ENCODE measurements at regions of chr4 and their contacts with region 1.

Region 1: DNA sequence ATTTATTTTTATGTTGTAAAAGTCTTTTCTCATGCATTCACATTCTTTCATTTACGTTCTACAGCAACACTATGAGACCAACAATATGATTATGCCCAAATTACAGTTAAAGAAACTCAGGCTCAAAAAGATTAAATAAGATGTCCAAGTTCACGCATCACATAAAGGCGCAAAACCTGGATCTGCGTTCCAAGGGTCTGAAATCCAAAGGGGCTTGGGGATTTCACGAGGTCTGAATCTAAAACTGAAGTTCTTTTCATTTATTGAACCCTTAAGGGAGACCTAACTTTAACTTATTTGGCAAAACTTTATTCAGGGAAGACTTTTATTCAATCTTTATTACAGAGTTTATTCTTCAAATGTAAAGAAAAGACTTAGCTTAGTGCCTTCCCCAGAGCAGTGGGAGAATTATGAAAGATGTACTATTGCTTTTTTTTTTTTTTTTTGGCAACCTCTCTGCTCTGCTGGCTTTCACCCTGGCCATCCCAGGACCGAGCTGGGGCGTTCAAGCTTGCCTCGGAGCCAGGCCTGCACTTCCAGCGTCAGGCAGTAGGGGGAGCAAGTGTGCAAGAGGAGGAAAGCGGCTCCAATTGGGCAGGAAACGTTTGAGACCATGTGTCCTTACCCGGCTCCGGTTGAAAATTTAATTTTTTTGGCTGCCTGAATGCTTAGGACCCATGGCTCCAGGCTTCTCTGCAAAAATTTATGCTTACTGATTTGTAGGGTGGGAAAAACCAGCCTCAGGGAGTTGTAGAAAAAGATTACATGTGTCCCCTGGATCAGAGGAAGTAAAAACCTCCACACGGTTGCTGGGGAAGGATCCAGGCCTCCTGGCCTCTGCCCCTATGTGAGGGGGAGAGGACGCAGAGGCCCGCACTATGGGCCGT is 344.3 kb upstream of the KLF3 start:
- DNase-seq: peak; percentile 74
- ATAC-seq: peak; percentile 80
- H3K4me3 ChIP-seq: peak overlapping the region; percentile 47
- H3K27ac ChIP-seq: peak overlapping the region; percentile 91
- H3K4me1 ChIP-seq: peaks cover 27% of the 10 kb centered on the region
- H3K27me3 ChIP-seq: no peaks in the 10 kb centered on the region
- CTCF ChIP-seq: peak; percentile 93 to 99 (median 99)
- EP300 ChIP-seq: no peak
- POLR2A ChIP-seq: no peak
- RAD21 ChIP-seq: peak; percentile 99

Region 2: GRCh38 chr4:37891260-37892159 is 428.2 kb before region 1 on chr4:
- CTCF ChIA-PET with region 1: no interaction called
- POLR2A ChIA-PET with region 1: no interaction called
- RAD21 ChIA-PET with region 1: no interaction called
- SMC1A ChIA-PET with region 1: no interaction called
- in situ Hi-C with region 1: no loop called
- intact Hi-C with region 1: loop called (anchors 10 kb)
- DNase-seq: peak; percentile 79
- ATAC-seq: peak; percentile 69
- H3K4me3 ChIP-seq: peak overlapping the region; percentile 59
- H3K27ac ChIP-seq: peak overlapping the region; percentile 70
- H3K4me1 ChIP-seq: peaks cover 18% of the 10 kb centered on the region
- H3K27me3 ChIP-seq: no peaks in the 10 kb centered on the region
- CTCF ChIP-seq: peak in 1 of 3 experiments; percentile 15; a peak in 1 of 6 replicates
- EP300 ChIP-seq: peak in 1 of 2 experiments; percentile 70; a peak in 1 of 4 replicates
- POLR2A ChIP-seq: peak; percentile 72
- RAD21 ChIP-seq: no peak

Region 3: DNA sequence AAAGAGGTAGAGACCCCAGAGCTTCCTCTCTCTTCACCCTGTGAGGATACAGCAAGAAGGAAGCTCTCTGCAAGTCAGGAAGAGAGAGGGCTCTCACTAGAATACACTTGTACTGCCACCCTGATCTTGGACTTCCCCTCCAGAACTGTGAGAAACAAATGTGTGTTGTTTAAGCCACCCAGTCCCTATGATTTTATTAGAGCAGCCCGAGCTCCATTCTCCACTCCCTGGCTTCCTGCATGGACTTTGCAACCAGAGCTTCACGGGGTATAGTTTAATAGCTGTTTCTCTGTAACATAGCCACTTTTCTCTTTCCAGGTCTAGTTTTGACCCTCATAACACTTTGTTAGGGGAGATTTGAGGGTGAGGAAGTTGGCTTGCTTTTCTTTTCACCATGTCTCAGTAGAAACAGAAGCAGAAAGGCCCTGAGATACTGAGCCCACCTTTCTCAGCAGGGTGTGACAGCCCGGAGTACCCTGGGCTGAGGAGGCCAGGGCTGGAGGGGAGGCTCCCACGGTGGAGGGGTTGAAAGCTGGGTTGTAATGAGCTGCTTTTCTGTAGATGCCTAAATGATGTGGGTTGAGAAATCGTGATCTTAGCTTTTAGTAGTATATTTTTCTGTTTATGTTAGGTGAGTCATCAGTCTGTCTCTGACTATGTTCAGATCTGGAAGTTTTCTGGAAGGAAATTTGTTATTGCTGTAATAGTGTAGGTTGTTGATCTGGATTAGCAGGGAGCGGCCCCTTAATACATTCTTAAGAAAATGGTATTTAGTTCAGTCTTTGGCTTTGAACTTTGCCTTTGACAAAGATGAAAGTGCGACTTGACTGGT is 240.9 kb before region 1 on chr4:
- CTCF ChIA-PET with region 1: no interaction called
- POLR2A ChIA-PET with region 1: interaction called, 4 read pairs
- RAD21 ChIA-PET with region 1: interaction called, 3 read pairs
- SMC1A ChIA-PET with region 1: interaction called, 3 read pairs
- in situ Hi-C with region 1: loop called (anchors 5 kb)
- intact Hi-C with region 1: no loop called
- DNase-seq: no peak
- ATAC-seq: peak; percentile 65
- H3K4me3 ChIP-seq: peak overlapping the region; percentile 7; the same call in 1 of the 2 replicates
- H3K27ac ChIP-seq: peak overlapping the region; percentile 87
- H3K4me1 ChIP-seq: peaks cover 47% of the 10 kb centered on the region
- H3K27me3 ChIP-seq: no peaks in the 10 kb centered on the region
- CTCF ChIP-seq: no peak
- EP300 ChIP-seq: no peak
- POLR2A ChIP-seq: no peak
- RAD21 ChIP-seq: no peak

Region 4: DNA sequence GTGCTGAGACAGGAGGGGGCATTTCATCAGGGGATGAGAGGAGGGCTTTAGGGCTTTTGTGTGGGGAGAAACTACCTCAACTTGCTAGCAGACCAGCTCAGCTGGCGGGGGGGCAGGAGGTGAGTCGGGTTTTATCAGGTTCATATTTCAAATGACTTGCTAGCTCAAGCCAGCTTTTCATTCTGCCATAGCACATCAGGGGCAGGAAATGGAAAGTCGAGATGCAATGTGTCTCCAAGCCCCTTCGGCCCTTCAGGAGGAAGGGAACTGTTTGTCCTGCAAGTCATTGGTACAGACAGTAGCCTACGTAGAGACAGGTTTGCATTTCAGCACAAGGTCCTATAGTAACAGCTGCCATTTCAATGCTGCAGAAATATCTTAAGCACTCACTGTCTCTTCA is 165.4 kb before region 1 on chr4:
- CTCF ChIA-PET with region 1: no interaction called
- POLR2A ChIA-PET with region 1: no interaction called
- RAD21 ChIA-PET with region 1: no interaction called
- SMC1A ChIA-PET with region 1: no interaction called
- in situ Hi-C with region 1: no loop called
- intact Hi-C with region 1: no loop called
- DNase-seq: no peak
- ATAC-seq: no peak
- H3K4me3 ChIP-seq: no peak overlapping the region
- H3K27ac ChIP-seq: no peak overlapping the region
- H3K4me1 ChIP-seq: no peaks in the 10 kb centered on the region; the same call in 1 of the 2 replicates
- H3K27me3 ChIP-seq: no peaks in the 10 kb centered on the region
- CTCF ChIP-seq: no peak
- EP300 ChIP-seq: no peak
- POLR2A ChIP-seq: no peak
- RAD21 ChIP-seq: no peak

Region 5: DNA sequence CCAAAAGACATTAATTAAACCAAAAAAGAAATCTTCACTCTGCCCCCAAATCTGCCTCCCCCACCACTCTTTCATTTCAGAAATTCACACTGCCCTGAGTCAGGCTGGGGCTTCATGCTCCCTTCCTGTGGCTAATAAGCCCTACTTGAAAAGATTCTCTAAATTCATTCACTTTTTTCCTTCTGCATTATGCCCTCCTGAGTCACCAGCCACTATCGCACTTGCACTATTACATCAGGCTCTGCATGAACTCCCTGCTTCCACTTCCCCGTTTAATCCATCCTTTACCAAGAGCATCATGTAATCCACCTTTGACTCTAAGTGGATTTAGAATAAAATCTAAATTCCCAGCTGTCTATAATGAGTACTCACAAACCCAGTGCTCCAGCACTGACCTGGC is 48.9 kb after region 1 on chr4:
- CTCF ChIA-PET with region 1: no interaction called
- POLR2A ChIA-PET with region 1: no interaction called
- RAD21 ChIA-PET with region 1: no interaction called
- SMC1A ChIA-PET with region 1: no interaction called
- in situ Hi-C with region 1: no loop called
- intact Hi-C with region 1: no loop called
- DNase-seq: no peak
- ATAC-seq: no peak
- H3K4me3 ChIP-seq: no peak overlapping the region
- H3K27ac ChIP-seq: no peak overlapping the region
- H3K4me1 ChIP-seq: peaks cover 6% of the 10 kb centered on the region
- H3K27me3 ChIP-seq: no peaks in the 10 kb centered on the region
- CTCF ChIP-seq: no peak
- EP300 ChIP-seq: no peak
- POLR2A ChIP-seq: no peak
- RAD21 ChIP-seq: no peak

Region 6: DNA sequence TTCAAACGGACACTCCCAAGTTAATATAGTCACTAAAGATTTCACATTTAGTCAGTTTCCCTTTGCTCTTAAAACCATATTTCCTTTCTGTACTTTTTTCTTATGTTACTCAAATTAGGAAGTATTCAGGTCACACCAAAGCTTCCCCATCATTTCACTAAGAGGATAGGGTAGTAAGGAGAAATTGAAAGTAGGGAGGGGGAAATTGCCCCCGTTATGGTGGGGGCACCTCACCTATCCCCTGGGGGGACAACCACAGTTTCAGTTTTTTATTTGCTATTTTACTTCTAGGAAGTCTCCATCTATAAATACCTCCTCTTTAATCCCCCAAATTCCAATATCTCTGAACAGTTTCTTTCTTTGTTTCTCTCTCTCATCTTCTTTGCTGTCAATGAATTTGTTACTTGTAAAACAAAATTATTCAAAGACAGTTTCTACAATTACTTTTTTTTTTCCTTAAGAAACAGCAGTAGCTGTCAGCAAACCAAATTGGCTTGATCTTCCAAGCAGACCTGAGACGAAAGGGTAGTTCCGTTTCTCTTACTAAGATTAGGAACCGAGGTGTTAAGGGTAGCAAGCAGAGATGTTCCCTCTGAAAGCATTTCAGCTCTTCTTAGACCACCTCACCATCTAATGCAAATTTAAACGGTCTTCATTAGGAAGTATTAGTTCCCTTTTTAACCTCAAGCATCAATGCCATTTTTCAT is 184.1 kb after region 1 on chr4:
- CTCF ChIA-PET with region 1: interaction called, 11 read pairs
- POLR2A ChIA-PET with region 1: interaction called, 3 read pairs
- RAD21 ChIA-PET with region 1: interaction called, 15 read pairs
- SMC1A ChIA-PET with region 1: interaction called, 17 read pairs
- in situ Hi-C with region 1: no loop called
- intact Hi-C with region 1: loop called (anchors 2 kb)
- DNase-seq: peak; percentile 86
- ATAC-seq: peak; percentile 95
- H3K4me3 ChIP-seq: no peak overlapping the region; the same call in 1 of the 2 replicates
- H3K27ac ChIP-seq: peak overlapping the region; percentile 47
- H3K4me1 ChIP-seq: peaks cover 31% of the 10 kb centered on the region
- H3K27me3 ChIP-seq: no peaks in the 10 kb centered on the region
- CTCF ChIP-seq: no peak
- EP300 ChIP-seq: peak; percentile 59 to 83; a peak in 1 of 4 replicates
- POLR2A ChIP-seq: no peak
- RAD21 ChIP-seq: no peak; the same call in 1 of the 2 replicates

Region 7: DNA sequence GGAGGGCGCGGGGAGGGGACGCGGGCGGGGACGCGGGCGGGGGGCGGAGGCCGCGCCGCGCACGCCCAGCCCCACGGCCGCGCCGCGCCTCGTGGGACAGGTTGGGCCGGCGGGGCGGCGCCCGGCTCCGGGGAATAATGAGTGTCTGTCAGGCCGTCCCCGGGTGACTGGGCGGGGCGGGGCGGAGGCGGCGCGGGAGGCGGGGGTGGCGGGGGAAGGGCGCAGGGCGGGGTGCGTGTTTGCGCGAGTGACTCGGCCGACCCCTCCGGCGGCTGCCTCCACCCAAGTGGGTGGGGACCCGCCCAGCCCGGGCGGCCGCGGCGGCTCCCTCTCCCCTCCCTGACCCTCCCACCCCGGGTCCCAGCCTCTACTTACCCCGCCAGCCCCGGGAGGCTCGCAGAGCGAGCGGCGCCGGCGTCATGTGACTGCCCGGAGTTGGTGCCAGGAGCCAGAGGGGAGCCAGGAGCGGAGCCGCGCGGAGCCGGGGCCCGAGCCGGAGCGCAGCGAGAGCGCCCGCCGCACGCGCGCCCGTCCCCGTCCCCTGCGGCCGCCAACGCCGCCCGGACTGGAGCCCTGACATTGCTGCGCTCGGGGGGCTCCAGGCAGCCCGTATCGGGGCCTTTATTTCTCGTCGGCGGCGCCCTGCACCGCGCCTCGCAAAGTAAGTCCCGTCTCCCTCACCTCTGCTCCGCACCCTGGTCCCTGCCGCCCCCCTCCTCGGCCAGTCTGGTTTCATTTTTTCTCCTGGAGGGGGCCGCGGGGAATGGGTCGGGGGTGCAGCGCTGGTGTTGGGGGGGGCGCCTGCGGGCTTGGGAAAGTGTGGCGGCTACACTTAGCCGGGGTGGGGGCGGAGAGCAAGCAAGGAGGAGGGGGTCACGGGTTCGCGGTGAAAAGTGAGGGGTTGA is 344.4 kb after region 1 on chr4 and contains the start of gene KLF3:
- CTCF ChIA-PET with region 1: interaction called, 28 read pairs
- POLR2A ChIA-PET with region 1: interaction called, 4 read pairs
- RAD21 ChIA-PET with region 1: interaction called, 66 read pairs
- SMC1A ChIA-PET with region 1: interaction called, 79 read pairs
- in situ Hi-C with region 1: no loop called
- intact Hi-C with region 1: no loop called
- DNase-seq: no peak
- ATAC-seq: peak; percentile 73
- H3K4me3 ChIP-seq: peak within 1 kb of the TSS; percentile 78
- H3K27ac ChIP-seq: peak within 1 kb of the TSS; percentile 68
- H3K4me1 ChIP-seq: peaks cover 12% of the 10 kb centered on the region
- H3K27me3 ChIP-seq: peaks cover 0 to 4% of the 10 kb centered on the region in 2 experiments; a peak in 1 of 4 replicates
- CTCF ChIP-seq: no peak
- EP300 ChIP-seq: no peak
- POLR2A ChIP-seq: peak; percentile 67
- RAD21 ChIP-seq: no peak
- polyA plus RNA-seq, gene KLF3: 1.4 to 1.5 TPM

Region 8: DNA sequence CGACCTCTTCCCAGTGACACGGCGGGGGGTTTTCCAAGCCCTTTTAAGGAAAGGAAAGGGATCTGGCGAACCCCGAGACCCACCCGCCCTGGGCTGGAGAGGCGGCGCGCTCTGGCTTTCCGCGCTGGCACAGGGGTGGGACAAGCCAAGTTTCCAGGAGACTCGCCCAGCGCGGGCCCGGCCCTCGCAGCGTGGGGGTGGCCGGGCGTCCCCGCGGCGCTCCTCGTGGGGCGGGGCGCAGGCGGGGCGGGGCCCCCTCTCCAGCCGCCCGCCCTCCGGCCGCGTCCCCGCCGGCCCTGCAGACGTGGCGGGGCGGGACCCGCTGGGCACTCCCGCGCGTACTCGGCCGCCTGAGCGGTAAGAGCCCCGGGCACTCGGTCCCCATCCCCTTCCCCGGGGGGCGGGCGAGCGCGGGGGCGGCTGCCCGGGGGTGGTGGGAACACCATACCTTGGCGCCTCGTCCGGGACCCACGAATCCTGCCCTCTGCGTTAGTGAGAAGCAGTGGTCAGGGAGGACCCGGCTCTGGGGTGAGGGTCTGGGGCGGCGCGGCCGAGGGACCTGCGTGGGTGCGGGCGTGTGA is 547.9 kb after region 1 on chr4 and contains the start of gene FAM114A1:
- CTCF ChIA-PET with region 1: interaction called, 3 read pairs
- POLR2A ChIA-PET with region 1: no interaction called
- RAD21 ChIA-PET with region 1: no interaction called
- SMC1A ChIA-PET with region 1: no interaction called
- in situ Hi-C with region 1: loop called (anchors 25 kb)
- intact Hi-C with region 1: no loop called
- DNase-seq: no peak
- ATAC-seq: peak; percentile 99
- H3K4me3 ChIP-seq: peak within 1 kb of the TSS; percentile 82
- H3K27ac ChIP-seq: no peak within 1 kb of the TSS; the same call in 1 of the 2 replicates
- H3K4me1 ChIP-seq: peaks cover 7% of the 10 kb centered on the region
- H3K27me3 ChIP-seq: no peaks in the 10 kb centered on the region
- CTCF ChIP-seq: no peak
- EP300 ChIP-seq: no peak
- POLR2A ChIP-seq: peak; percentile 80
- RAD21 ChIP-seq: no peak
- polyA plus RNA-seq, gene FAM114A1: 1.3 to 1.9 TPM

Measured in GM12878 (cell line).